HCT116 (cell line): ENCODE measurements at regions of chr2 and their contacts with region 1.

Region 1: DNA sequence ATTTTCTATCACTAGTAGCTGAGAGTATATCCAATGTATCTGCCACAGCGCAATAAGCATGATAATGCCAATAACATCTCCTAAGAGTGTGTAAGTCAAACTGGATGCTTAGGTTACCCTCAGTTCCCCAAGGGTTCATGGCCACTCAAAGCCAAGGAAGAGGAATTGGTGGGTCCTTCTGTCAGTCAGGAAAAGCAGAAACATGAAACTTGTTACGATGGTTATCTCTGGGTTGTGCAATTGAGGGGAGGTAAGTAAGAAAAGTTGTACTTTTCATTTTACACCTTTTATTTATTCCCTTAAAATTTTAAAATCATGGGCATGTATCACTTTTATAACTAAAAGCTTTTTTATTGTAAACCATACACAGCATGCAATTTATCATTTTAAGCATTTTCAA is 10.1 kb upstream of the GAD1 start:
- DNase-seq: no peak
- ATAC-seq: no peak
- H3K4me3 ChIP-seq: no peak overlapping the region
- H3K27ac ChIP-seq: no peak overlapping the region
- H3K4me1 ChIP-seq: no peaks in the 10 kb centered on the region
- H3K27me3 ChIP-seq: no peaks in the 10 kb centered on the region; the same call in 1 of the 2 replicates
- CTCF ChIP-seq: no peak
- POLR2A ChIP-seq: no peak
- RAD21 ChIP-seq: no peak

Region 2: DNA sequence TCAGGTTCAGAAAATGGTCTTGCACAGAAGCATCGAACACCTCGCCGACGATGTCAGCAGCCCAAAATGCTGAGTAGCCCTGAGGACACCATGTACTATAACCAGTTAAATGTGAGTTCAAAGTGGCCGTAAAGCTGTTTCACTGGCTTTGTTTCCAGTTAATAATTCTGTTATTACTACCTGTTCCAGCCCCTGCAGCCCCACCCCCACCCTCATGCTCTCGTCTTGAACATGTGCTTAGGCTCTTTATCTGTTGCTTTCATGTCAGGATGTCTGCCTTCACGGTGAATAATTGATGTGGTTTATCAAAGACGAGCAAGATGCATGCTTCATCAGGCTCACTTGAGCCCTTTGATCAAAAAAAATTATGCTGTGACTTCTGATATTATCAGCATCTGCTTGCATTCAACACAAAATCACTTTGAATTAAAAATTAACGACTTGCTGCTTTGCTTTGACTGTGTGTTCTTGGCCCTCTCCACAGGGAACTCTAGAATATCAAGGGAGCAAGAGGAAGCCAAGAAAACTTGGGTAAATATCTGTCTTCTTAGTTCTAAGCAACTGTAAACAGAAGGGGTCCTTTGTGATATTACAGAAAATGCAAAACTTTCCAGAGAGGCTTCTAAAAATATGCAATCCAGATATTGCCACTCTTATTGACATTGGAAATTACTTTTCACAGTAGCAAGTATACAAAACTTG is 154.8 kb before region 1 on chr2:
- CTCF ChIA-PET with region 1: no interaction called
- POLR2A ChIA-PET with region 1: no interaction called
- RAD21 ChIA-PET with region 1: no interaction called
- intact Hi-C with region 1: loop called (anchors 10 kb)
- DNase-seq: no peak
- ATAC-seq: no peak
- H3K4me3 ChIP-seq: no peak overlapping the region
- H3K27ac ChIP-seq: no peak overlapping the region
- H3K4me1 ChIP-seq: no peaks in the 10 kb centered on the region
- H3K27me3 ChIP-seq: no peaks in the 10 kb centered on the region
- CTCF ChIP-seq: no peak
- POLR2A ChIP-seq: no peak
- RAD21 ChIP-seq: no peak

Region 3: GRCh38 chr2:170695521-170696410 is 110.8 kb before region 1 on chr2:
- CTCF ChIA-PET with region 1: no interaction called
- POLR2A ChIA-PET with region 1: no interaction called
- RAD21 ChIA-PET with region 1: no interaction called
- intact Hi-C with region 1: no loop called
- DNase-seq: no peak
- ATAC-seq: no peak
- H3K4me3 ChIP-seq: no peak overlapping the region
- H3K27ac ChIP-seq: no peak overlapping the region
- H3K4me1 ChIP-seq: no peaks in the 10 kb centered on the region
- H3K27me3 ChIP-seq: no peaks in the 10 kb centered on the region
- CTCF ChIP-seq: no peak
- POLR2A ChIP-seq: no peak
- RAD21 ChIP-seq: no peak

Region 4: DNA sequence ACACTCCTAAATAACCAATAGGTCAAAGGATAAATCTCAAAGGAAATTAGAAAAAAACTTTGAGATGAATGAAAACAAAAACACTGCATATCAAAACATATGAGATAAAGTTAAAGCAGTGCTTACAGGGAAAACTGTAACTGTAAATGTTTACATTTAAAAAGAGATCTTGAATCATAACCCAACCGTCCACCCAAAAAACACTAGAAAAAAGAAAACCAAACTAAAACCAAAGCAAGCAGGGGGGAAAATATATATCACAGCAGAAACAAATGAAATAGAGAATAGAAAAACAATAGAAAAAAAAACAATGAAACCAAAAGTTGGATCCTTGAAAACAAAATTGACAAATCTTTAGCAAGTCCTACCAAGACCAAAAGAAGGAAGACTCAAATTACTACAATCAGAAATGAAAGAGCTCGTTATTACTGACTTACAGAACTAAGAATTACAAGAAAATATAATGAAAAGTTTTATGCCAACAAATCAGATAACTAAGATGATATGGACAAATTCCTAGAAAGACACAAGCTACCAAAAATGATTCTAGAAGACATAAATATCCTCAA is 288.6 kb after region 1 on chr2:
- CTCF ChIA-PET with region 1: no interaction called
- POLR2A ChIA-PET with region 1: no interaction called
- RAD21 ChIA-PET with region 1: no interaction called
- intact Hi-C with region 1: no loop called
- DNase-seq: no peak
- ATAC-seq: no peak
- H3K4me3 ChIP-seq: no peak overlapping the region
- H3K27ac ChIP-seq: no peak overlapping the region
- H3K4me1 ChIP-seq: no peaks in the 10 kb centered on the region; a peak in 1 of 4 replicates
- H3K27me3 ChIP-seq: no peaks in the 10 kb centered on the region
- CTCF ChIP-seq: no peak
- POLR2A ChIP-seq: no peak
- RAD21 ChIP-seq: no peak